Caco-2 (cell line): ENCODE measurements at regions of chr14 and their contacts with region 1.

Region 1: GRCh38 chr14:73759714-73760597 is 45.8 kb upstream of the PNMA1 start:
- DNase-seq: peak; percentile 96 to 98
- H3K4me3 ChIP-seq: peak overlapping the region; percentile 64
- H3K4me3 Mint-ChIP-seq: peak overlapping the region; percentile 84
- H3K27ac Mint-ChIP-seq: peak overlapping the region; percentile 93
- H3K4me1 ChIP-seq: peaks cover 55% of the 10 kb centered on the region
- H3K4me1 Mint-ChIP-seq: peaks cover 34% of the 10 kb centered on the region
- H3K27me3 ChIP-seq: no peaks in the 10 kb centered on the region
- H3K27me3 Mint-ChIP-seq: no peaks in the 10 kb centered on the region
- CTCF ChIP-seq: peak in 1 of 2 experiments; percentile 19

Region 2: GRCh38 chr14:73452341-73453186 is 307.4 kb before region 1 on chr14:
- CTCF ChIA-PET with region 1: no interaction called
- POLR2A ChIA-PET with region 1: no interaction called
- intact Hi-C with region 1: no loop called
- DNase-seq: no peak
- H3K4me3 ChIP-seq: no peak overlapping the region
- H3K4me3 Mint-ChIP-seq: no peak overlapping the region
- H3K27ac Mint-ChIP-seq: no peak overlapping the region
- H3K4me1 ChIP-seq: 0 out of 2 replicates have a peak, but pooled peaks cover 8% of the 10 kb centered on the region
- H3K4me1 Mint-ChIP-seq: peaks cover 9% of the 10 kb centered on the region
- H3K27me3 ChIP-seq: no peaks in the 10 kb centered on the region
- H3K27me3 Mint-ChIP-seq: no peaks in the 10 kb centered on the region
- CTCF ChIP-seq: no peak

Region 3: GRCh38 chr14:73633116-73634010 is 126.6 kb before region 1 on chr14:
- CTCF ChIA-PET with region 1: no interaction called
- POLR2A ChIA-PET with region 1: no interaction called
- intact Hi-C with region 1: no loop called
- DNase-seq: peak; percentile 56 to 72
- H3K4me3 ChIP-seq: no peak overlapping the region
- H3K4me3 Mint-ChIP-seq: peak overlapping the region; percentile 47
- H3K27ac Mint-ChIP-seq: no peak overlapping the region
- H3K4me1 ChIP-seq: peaks cover 7% of the 10 kb centered on the region; the same call in 1 of the 2 replicates
- H3K4me1 Mint-ChIP-seq: peaks cover 15% of the 10 kb centered on the region
- H3K27me3 ChIP-seq: no peaks in the 10 kb centered on the region
- H3K27me3 Mint-ChIP-seq: no peaks in the 10 kb centered on the region
- CTCF ChIP-seq: peak; percentile 86 to 87

Region 4: GRCh38 chr14:73741386-73741875 is 18.5 kb before region 1 on chr14:
- CTCF ChIA-PET with region 1: interaction called, 60 read pairs
- POLR2A ChIA-PET with region 1: interaction called, 14 read pairs
- intact Hi-C with region 1: loop called (anchors 1 kb)
- DNase-seq: peak; percentile 56 to 73
- H3K4me3 ChIP-seq: peak overlapping the region; percentile 15; the same call in 1 of the 2 replicates
- H3K4me3 Mint-ChIP-seq: peak overlapping the region; percentile 69
- H3K27ac Mint-ChIP-seq: peak overlapping the region; percentile 83
- H3K4me1 ChIP-seq: peaks cover 66% of the 10 kb centered on the region
- H3K4me1 Mint-ChIP-seq: peaks cover 39% of the 10 kb centered on the region
- H3K27me3 ChIP-seq: no peaks in the 10 kb centered on the region
- H3K27me3 Mint-ChIP-seq: no peaks in the 10 kb centered on the region
- CTCF ChIP-seq: no peak

Region 5: GRCh38 chr14:73771848-73772638 is 12.1 kb after region 1 on chr14:
- CTCF ChIA-PET with region 1: interaction called, 12 read pairs
- POLR2A ChIA-PET with region 1: interaction called, 21 read pairs
- intact Hi-C with region 1: loop called (anchors 1 kb)
- DNase-seq: peak; percentile 91 to 94
- H3K4me3 ChIP-seq: no peak overlapping the region
- H3K4me3 Mint-ChIP-seq: peak overlapping the region; percentile 44
- H3K27ac Mint-ChIP-seq: peak overlapping the region; percentile 51
- H3K4me1 ChIP-seq: peaks cover 31% of the 10 kb centered on the region
- H3K4me1 Mint-ChIP-seq: peaks cover 50% of the 10 kb centered on the region
- H3K27me3 ChIP-seq: no peaks in the 10 kb centered on the region
- H3K27me3 Mint-ChIP-seq: no peaks in the 10 kb centered on the region
- CTCF ChIP-seq: no peak

Region 6: DNA sequence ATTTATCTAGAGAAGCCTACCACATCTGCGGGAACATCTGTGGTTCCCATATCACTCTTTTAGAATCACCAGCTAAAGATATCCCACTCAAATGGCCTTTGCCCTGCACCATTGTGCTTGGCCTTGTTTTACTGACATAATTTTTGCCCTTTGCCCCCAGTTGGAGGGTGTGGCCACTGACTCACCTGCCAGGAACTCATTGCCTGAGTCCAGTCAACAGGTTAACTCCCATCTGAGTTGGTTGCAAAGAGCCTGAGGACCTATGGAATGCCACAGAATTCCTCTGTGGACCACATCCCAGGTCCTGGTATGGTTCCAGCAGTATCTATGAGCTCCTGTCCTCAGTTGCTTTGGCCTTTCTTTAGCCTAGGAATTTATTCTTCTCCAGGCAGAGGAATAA is 36.0 kb after region 1 on chr14:
- CTCF ChIA-PET with region 1: interaction called, 10 read pairs
- POLR2A ChIA-PET with region 1: interaction called, 18 read pairs
- intact Hi-C with region 1: loop called (anchors 2 kb)
- DNase-seq: peak; percentile 92 to 96
- H3K4me3 ChIP-seq: no peak overlapping the region
- H3K4me3 Mint-ChIP-seq: no peak overlapping the region
- H3K27ac Mint-ChIP-seq: peak overlapping the region; percentile 56
- H3K4me1 ChIP-seq: peaks cover 49% of the 10 kb centered on the region
- H3K4me1 Mint-ChIP-seq: peaks cover 46% of the 10 kb centered on the region
- H3K27me3 ChIP-seq: no peaks in the 10 kb centered on the region
- H3K27me3 Mint-ChIP-seq: no peaks in the 10 kb centered on the region
- CTCF ChIP-seq: no peak

Region 7: DNA sequence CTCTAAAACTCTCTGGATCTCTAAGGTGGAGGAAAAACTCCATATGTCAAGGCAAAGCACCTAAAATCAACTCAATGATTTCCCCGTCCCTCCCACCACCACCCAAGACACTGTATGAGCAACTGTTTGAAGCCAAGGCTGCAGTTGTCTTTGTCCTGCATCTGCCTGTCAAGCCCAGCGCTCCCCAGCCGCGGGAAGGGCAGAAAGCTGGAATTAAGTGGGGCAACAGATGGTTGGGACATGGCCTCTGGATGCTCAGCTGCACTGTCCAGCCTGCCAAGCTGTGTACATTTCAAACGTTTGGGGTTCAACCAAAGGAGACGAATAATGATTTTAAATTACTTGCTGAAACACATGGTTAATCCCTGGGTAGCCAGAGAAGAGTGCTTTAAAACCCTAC is 49.4 kb after region 1 on chr14:
- CTCF ChIA-PET with region 1: no interaction called
- POLR2A ChIA-PET with region 1: no interaction called
- intact Hi-C with region 1: no loop called
- DNase-seq: no peak
- H3K4me3 ChIP-seq: no peak overlapping the region
- H3K4me3 Mint-ChIP-seq: no peak overlapping the region
- H3K27ac Mint-ChIP-seq: no peak overlapping the region
- H3K4me1 ChIP-seq: peaks cover 12% of the 10 kb centered on the region
- H3K4me1 Mint-ChIP-seq: peaks cover 5% of the 10 kb centered on the region
- H3K27me3 ChIP-seq: no peaks in the 10 kb centered on the region
- H3K27me3 Mint-ChIP-seq: no peaks in the 10 kb centered on the region
- CTCF ChIP-seq: no peak

Region 8: GRCh38 chr14:73851644-73852382 is 91.9 kb after region 1 on chr14 and contains the start of gene PTGR2:
- CTCF ChIA-PET with region 1: interaction called, 11 read pairs
- POLR2A ChIA-PET with region 1: interaction called, 17 read pairs
- intact Hi-C with region 1: no loop called
- DNase-seq: peak; percentile 99
- H3K4me3 ChIP-seq: peak within 1 kb of the TSS; percentile 56
- H3K4me3 Mint-ChIP-seq: peak within 1 kb of the TSS; percentile 94
- H3K27ac Mint-ChIP-seq: peak within 1 kb of the TSS; percentile 99
- H3K4me1 ChIP-seq: peaks cover 18% of the 10 kb centered on the region
- H3K4me1 Mint-ChIP-seq: no peaks in the 10 kb centered on the region
- H3K27me3 ChIP-seq: no peaks in the 10 kb centered on the region
- H3K27me3 Mint-ChIP-seq: no peaks in the 10 kb centered on the region
- CTCF ChIP-seq: peak in 1 of 2 experiments; percentile 14
- total RNA-seq, gene PTGR2: 14.2 and 16.5 TPM in 2 replicates